Activated T-helper 1 cell treated with anti-CD3 and anti-CD28 coated beads, Interleukin-12 subunit alpha, Interleukin-12 subunit beta, Interleukin-2, Interleukin-4 antibody, amounts not matched to agents 30 ng/mL and 10 ng/mL and 1 ng/mL, durations not matched to agents 14 hours and 24 hours and 36 hours (primary cell): ENCODE measurements at regions of chr14 and their contacts with region 1.

Region 1: DNA sequence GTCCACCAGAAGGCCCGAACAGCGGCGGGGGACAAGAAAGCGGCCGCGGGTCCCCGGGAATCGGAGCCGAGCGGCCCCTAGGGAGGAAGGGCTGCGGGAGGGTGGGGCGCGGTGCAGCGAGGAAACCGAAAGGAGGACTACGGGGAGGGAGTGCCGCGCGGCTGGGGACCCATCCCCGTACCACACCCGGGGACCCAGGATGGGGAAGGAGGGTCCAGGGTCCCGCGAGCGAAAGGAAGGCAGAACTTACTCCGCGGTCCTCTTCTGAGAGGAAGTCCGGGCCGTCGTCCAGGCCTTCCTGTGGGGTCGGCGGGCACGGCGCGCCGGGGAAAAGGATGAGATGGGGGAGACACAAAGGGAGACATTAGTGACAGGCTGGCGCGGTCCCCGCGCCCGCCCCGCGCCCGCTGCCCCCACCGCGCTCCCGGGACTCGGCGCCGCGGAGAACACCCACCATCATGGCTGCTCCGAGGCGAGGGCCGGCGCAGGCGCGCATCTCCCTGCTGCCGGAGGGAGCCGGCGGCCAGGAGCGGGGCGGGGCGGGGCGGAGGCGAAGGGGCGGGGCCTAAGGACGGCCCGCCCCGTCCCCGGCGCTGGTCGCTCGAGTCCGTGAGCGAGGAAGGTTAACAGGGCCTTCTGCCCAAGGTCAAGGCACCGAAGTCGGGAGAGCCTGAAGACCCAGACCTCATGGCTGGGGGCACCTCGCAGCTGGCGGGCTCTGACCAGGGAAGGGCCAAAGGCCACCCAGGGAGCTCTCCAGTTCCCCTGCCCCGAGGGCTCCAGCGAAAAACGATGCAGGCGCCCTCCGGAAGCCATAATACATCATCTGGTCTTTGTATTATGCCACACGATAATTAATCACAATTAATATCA is at the start of gene SNX6:
- DNase-seq: peak; percentile 76
- H3K4me3 Mint-ChIP-seq: peak within 1 kb of the TSS; percentile 95
- H3K27ac Mint-ChIP-seq: peak within 1 kb of the TSS; percentile 99
- H3K4me1 Mint-ChIP-seq: peaks cover 8% of the 10 kb centered on the region
- H3K27me3 Mint-ChIP-seq: peaks cover 11% of the 10 kb centered on the region
- total RNA-seq, gene SNX6: 70.3 and 75.6 TPM in 2 replicates

Region 2: DNA sequence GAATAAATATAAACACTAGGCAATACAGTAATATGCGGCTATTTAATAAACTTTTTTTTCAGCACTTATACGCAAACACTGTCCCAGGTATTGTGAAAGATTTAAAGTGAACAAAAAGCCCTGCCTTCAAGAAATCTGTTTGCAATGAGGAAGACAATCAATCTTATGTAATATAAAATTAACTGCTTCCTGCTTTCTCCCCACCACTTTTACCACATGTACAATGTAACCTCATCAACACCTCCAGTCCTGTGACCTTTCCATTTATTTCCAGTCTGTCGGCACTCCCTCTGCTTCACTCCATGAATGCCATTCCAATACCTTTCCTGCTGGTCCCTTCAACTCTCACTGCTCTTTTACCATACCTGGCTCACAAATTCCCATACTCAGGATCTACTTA is 10.4 kb before region 1 on chr14:
- intact Hi-C with region 1: loop called (anchors 2 kb)
- DNase-seq: no peak
- H3K4me3 Mint-ChIP-seq: no peak overlapping the region
- H3K27ac Mint-ChIP-seq: no peak overlapping the region
- H3K4me1 Mint-ChIP-seq: peaks cover 40% of the 10 kb centered on the region
- H3K27me3 Mint-ChIP-seq: no peaks in the 10 kb centered on the region

Region 3: GRCh38 chr14:34665785-34666435 is 36.0 kb after region 1 on chr14:
- intact Hi-C with region 1: no loop called
- DNase-seq: no peak
- H3K4me3 Mint-ChIP-seq: no peak overlapping the region
- H3K27ac Mint-ChIP-seq: no peak overlapping the region
- H3K4me1 Mint-ChIP-seq: peaks cover 8% of the 10 kb centered on the region
- H3K27me3 Mint-ChIP-seq: peaks cover 11% of the 10 kb centered on the region

Region 4: DNA sequence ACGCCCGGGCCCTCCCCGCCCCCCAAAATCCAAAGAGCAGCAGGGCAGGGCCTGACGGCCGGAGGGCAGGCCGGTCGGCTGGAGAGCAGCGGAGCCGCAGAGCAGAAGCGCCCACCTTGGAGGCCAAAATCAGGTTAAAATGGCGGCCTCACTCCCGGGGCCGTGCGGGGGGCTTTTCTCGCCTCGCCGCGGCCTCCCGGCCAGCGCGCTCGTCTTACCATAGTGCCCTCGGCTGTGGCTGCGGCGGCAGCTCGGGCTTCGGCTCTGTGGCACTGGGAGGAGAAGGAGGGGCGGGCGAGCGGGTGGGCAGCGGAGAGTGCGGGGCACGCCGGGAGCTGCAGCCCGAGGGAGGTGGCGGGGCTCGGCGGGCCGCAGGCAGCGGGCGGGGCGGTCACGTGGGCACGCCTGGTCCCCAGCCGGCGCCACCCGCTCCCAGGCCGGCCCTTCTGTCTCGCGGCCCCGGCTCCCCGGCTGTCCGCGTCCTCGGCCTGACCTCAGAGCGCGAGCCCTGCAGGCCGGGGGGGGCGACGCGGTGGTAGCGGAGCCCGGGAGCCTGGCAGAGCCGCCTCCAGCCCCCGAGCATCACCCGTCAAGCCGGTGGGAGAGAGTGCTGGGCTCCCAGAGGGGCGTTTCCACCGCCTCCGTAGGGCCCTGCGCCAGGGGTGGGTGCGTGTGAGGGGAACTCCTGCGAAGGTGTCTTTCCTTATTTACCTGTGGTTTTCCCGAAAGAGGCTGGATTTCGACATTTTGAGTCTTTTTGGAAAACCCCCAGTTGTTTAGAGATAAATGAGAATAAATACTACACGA is 84.6 kb after region 1 on chr14 and contains the start of gene CFL2:
- intact Hi-C with region 1: loop called (anchors 1 kb)
- DNase-seq: peak; percentile 51
- H3K4me3 Mint-ChIP-seq: peak within 1 kb of the TSS; percentile 95
- H3K27ac Mint-ChIP-seq: peak within 1 kb of the TSS; percentile 95
- H3K4me1 Mint-ChIP-seq: peaks cover 33% of the 10 kb centered on the region
- H3K27me3 Mint-ChIP-seq: peaks cover 9% of the 10 kb centered on the region
- total RNA-seq, gene CFL2: 8.3 and 9.2 TPM in 2 replicates